A673 (cell line): ENCODE measurements at regions of chr2 and their contacts with region 1.

Region 1: GRCh38 chr2:27191053-27191829 is 20.6 kb upstream of the ATRAID start:
- DNase-seq: peak; percentile 88
- H3K4me3 ChIP-seq: no peak overlapping the region
- H3K27ac ChIP-seq: peak overlapping the region; percentile 14
- H3K4me1 ChIP-seq: peaks cover 22% of the 10 kb centered on the region
- H3K27me3 ChIP-seq: no peaks in the 10 kb centered on the region
- CTCF ChIP-seq: peak; percentile 87

Region 2: GRCh38 chr2:26652361-26653041 is 538.7 kb before region 1 on chr2:
- CTCF ChIA-PET with region 1: no interaction called
- POLR2A ChIA-PET with region 1: no interaction called
- intact Hi-C with region 1: no loop called
- DNase-seq: peak; percentile 62
- H3K4me3 ChIP-seq: no peak overlapping the region
- H3K27ac ChIP-seq: peak overlapping the region; percentile 41
- H3K4me1 ChIP-seq: peaks cover 16% of the 10 kb centered on the region
- H3K27me3 ChIP-seq: no peaks in the 10 kb centered on the region
- CTCF ChIP-seq: no peak

Region 3: GRCh38 chr2:26964446-26965130 is 226.7 kb before region 1 on chr2:
- CTCF ChIA-PET with region 1: interaction called, 8 read pairs
- POLR2A ChIA-PET with region 1: no interaction called
- intact Hi-C with region 1: loop called (anchors 5 kb)
- DNase-seq: no peak
- H3K4me3 ChIP-seq: no peak overlapping the region
- H3K27ac ChIP-seq: no peak overlapping the region
- H3K4me1 ChIP-seq: no peaks in the 10 kb centered on the region
- H3K27me3 ChIP-seq: peaks cover 14% of the 10 kb centered on the region
- CTCF ChIP-seq: no peak

Region 4: DNA sequence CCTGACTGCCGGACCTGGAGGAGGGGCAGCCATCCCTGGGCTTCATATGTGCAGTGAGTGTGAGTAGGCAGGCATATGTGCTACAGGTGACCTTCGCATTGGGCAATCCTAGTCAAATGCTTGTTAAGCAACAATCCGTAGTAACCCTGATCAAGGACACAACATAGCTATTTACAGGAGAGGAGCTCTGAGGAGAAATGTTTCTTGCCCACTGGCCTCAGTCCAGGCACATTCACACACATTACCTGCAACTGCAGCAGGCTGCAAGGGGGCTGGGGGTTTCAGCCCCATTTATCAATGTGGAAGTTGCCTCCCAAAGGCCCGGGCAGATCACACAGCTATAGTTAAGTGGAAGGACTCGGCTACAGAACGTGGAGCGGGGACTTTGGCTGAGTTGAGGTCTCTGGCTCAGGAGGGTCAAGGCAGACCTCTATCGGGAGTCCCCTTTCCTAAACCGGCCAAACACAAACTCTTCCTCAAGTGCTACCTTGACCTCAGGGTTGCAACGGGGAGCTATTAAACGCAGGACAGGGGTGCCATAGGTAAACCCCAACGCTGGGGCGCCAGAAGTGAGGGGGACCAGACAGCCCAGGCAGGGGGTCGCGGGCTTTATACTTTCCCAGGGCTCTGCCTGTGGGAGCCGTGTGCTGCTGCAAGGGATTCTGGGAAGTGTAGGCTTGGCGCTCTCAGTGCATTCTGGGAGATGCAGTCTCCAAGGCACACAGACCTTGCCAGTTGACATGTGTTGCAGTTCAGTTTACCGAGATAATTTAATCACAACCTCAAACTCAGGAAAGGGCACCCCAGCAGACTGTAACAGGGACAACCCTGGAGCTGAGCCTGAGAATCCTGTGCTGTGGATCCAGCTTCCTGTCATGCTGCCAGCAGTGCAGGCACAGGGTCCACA is 95.2 kb before region 1 on chr2:
- CTCF ChIA-PET with region 1: interaction called, 15 read pairs
- POLR2A ChIA-PET with region 1: interaction called, 3 read pairs
- intact Hi-C with region 1: loop called (anchors 1 kb)
- DNase-seq: peak; percentile 73
- H3K4me3 ChIP-seq: peak overlapping the region; percentile 10
- H3K27ac ChIP-seq: no peak overlapping the region
- H3K4me1 ChIP-seq: no peaks in the 10 kb centered on the region
- H3K27me3 ChIP-seq: no peaks in the 10 kb centered on the region
- CTCF ChIP-seq: no peak

Region 5: DNA sequence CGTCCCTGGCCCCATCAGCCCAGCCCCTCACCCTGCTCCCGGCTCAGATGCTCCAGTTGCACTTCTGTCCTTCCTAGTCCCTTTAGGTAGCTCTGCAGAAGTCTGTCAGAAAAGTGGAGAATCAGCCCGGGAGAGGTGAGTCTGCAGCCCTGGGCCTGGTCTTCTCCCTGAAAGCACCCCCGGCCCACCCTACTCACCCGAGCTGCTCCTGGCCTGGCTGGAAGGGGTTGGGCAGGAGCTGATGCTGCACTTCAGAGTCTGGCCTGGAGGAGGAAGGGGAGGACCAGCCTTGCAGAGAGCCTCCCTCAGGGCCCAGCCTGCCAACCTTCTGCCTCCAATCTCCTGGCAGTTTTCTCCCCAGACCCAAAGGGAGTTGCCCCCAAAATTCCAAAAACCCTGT is 88.9 kb before region 1 on chr2:
- CTCF ChIA-PET with region 1: interaction called, 15 read pairs
- POLR2A ChIA-PET with region 1: no interaction called
- intact Hi-C with region 1: loop called (anchors 1 kb)
- DNase-seq: no peak
- H3K4me3 ChIP-seq: no peak overlapping the region
- H3K27ac ChIP-seq: no peak overlapping the region
- H3K4me1 ChIP-seq: no peaks in the 10 kb centered on the region
- H3K27me3 ChIP-seq: no peaks in the 10 kb centered on the region
- CTCF ChIP-seq: no peak

Region 6: GRCh38 chr2:27202854-27203253 is 11.6 kb after region 1 on chr2:
- CTCF ChIA-PET with region 1: no interaction called
- POLR2A ChIA-PET with region 1: no interaction called
- intact Hi-C with region 1: no loop called
- DNase-seq: peak; percentile 54
- H3K4me3 ChIP-seq: no peak overlapping the region
- H3K27ac ChIP-seq: peak overlapping the region; percentile 7
- H3K4me1 ChIP-seq: peaks cover 21% of the 10 kb centered on the region
- H3K27me3 ChIP-seq: no peaks in the 10 kb centered on the region
- CTCF ChIP-seq: no peak

Region 7: GRCh38 chr2:27249891-27250651 is 58.8 kb after region 1 on chr2:
- CTCF ChIA-PET with region 1: no interaction called
- POLR2A ChIA-PET with region 1: no interaction called
- intact Hi-C with region 1: no loop called
- DNase-seq: peak; percentile 69
- H3K4me3 ChIP-seq: no peak overlapping the region
- H3K27ac ChIP-seq: no peak overlapping the region
- H3K4me1 ChIP-seq: no peaks in the 10 kb centered on the region
- H3K27me3 ChIP-seq: no peaks in the 10 kb centered on the region
- CTCF ChIP-seq: peak; percentile 91

Region 8: GRCh38 chr2:27308359-27308881 is 117.2 kb after region 1 on chr2 and contains the start of gene UCN:
- CTCF ChIA-PET with region 1: interaction called, 10 read pairs
- POLR2A ChIA-PET with region 1: no interaction called
- intact Hi-C with region 1: no loop called
- DNase-seq: peak; percentile 52
- H3K4me3 ChIP-seq: peak within 1 kb of the TSS; percentile 34
- H3K27ac ChIP-seq: no peak within 1 kb of the TSS
- H3K4me1 ChIP-seq: peaks cover 15% of the 10 kb centered on the region
- H3K27me3 ChIP-seq: peaks cover 23% of the 10 kb centered on the region
- CTCF ChIP-seq: no peak
- total RNA-seq, gene UCN: 0.64 and 0.68 TPM in 2 replicates